ENCODE measurements at regions of chr3 and their contacts with region 1.

Region 1: GRCh38 chr3:145727476-145727875 is 433.5 kb downstream of the PLOD2 start:
- DNase-seq: no peak
- H3K4me3 Mint-ChIP-seq: no peak overlapping the region
- H3K27ac Mint-ChIP-seq: no peak overlapping the region
- H3K4me1 Mint-ChIP-seq: no peaks in the 10 kb centered on the region
- H3K27me3 Mint-ChIP-seq: no peaks in the 10 kb centered on the region

Region 2: GRCh38 chr3:144221761-144222160 is 1505.7 kb before region 1 on chr3:
- CTCF ChIA-PET with region 1: no interaction called
- intact Hi-C with region 1: no loop called
- DNase-seq: no peak
- H3K4me3 Mint-ChIP-seq: no peak overlapping the region
- H3K27ac Mint-ChIP-seq: no peak overlapping the region
- H3K4me1 Mint-ChIP-seq: no peaks in the 10 kb centered on the region
- H3K27me3 Mint-ChIP-seq: peaks cover 3% of the 10 kb centered on the region

Region 3: DNA sequence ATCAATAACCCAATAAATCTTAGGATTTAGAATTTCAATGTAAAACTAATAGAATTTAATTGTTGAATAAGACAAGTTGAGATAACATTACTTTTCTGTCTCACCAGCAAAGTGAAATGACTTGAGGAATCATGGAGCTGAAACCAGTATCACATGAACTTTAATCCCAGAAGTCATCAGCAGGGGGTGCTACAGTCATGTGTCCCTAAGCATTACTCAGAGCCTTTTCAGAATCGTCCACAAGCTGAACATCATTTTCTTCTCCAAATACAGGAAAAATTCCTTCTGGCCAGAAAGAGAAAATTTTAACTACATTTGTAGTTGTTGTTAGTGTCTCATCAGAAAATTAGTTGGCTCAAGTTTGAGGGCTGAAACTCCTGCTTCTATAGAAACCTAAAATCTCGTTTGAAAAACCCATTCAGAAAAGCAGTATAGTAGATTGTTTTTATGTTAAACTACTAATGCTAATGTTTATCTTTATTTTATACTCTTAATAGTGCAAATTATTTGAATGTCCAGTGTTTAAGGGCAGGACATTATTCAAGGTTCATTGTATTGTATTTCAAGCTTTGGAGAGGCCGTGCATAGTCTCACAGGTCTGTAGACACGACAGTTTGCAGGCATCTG is 49.4 kb after region 1 on chr3:
- CTCF ChIA-PET with region 1: no interaction called
- intact Hi-C with region 1: loop called (anchors 10 kb)
- DNase-seq: peak; percentile 13
- H3K4me3 Mint-ChIP-seq: no peak overlapping the region
- H3K27ac Mint-ChIP-seq: no peak overlapping the region
- H3K4me1 Mint-ChIP-seq: no peaks in the 10 kb centered on the region
- H3K27me3 Mint-ChIP-seq: no peaks in the 10 kb centered on the region

Measured in activated naive CD4-positive, alpha-beta T cell treated with anti-CD3 and anti-CD28 coated beads for 36 hours (primary cell).